Caco-2 (cell line): ENCODE measurements at regions of chr19 and their contacts with region 1.

Region 1: GRCh38 chr19:12796146-12797071 is 5.1 kb downstream of the JUNB start:
- DNase-seq: peak; percentile 81 to 83
- H3K4me3 ChIP-seq: no peak overlapping the region
- H3K4me3 Mint-ChIP-seq: peak overlapping the region; percentile 45
- H3K27ac Mint-ChIP-seq: peak overlapping the region; percentile 21
- H3K4me1 ChIP-seq: peaks cover 9% of the 10 kb centered on the region
- H3K4me1 Mint-ChIP-seq: peaks cover 5% of the 10 kb centered on the region
- H3K27me3 ChIP-seq: no peaks in the 10 kb centered on the region
- H3K27me3 Mint-ChIP-seq: no peaks in the 10 kb centered on the region
- CTCF ChIP-seq: peak; percentile 91

Region 2: GRCh38 chr19:12564016-12564664 is 232.3 kb before region 1 on chr19:
- CTCF ChIA-PET with region 1: no interaction called
- POLR2A ChIA-PET with region 1: no interaction called
- intact Hi-C with region 1: no loop called
- DNase-seq: peak; percentile 82 to 90
- H3K4me3 ChIP-seq: no peak overlapping the region
- H3K4me3 Mint-ChIP-seq: no peak overlapping the region
- H3K27ac Mint-ChIP-seq: no peak overlapping the region
- H3K4me1 ChIP-seq: no peaks in the 10 kb centered on the region
- H3K4me1 Mint-ChIP-seq: no peaks in the 10 kb centered on the region
- H3K27me3 ChIP-seq: no peaks in the 10 kb centered on the region
- H3K27me3 Mint-ChIP-seq: no peaks in the 10 kb centered on the region
- CTCF ChIP-seq: peak; percentile 80 to 82

Region 3: DNA sequence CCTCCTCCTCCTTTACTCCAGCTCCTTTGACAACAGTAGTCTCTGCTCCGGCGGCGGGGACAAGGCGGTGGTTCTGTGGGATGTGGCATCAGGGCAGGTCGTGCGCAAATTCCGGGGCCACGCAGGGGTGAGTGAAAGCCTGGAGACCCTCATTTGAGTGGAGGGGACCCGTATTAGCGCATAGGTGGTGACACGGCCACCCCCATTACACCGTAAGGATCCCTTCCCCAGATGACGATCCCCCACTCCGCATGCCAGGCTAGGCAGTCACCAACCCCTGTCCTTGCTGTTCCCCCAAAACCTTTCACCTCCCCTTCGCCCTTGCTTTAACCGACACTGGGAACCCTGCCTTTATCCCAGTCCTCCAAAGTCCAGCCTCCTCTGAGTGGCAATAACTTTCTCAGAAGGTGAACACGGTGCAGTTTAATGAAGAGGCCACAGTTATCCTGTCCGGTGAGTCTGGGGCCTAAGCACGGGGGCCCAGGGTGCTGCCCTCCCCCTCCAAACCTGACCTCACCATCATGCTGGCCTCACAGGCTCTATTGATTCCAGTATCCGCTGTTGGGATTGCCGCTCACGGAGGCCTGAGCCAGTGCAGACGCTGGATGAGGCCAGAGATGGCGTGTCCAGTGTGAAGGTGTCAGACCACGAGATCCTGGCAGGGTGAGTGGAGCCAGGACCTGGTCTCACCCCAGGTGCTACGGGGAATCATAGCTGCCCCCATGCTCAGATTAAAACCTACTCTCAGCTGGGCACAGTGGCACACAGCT is 126.1 kb before region 1 on chr19:
- CTCF ChIA-PET with region 1: no interaction called
- POLR2A ChIA-PET with region 1: no interaction called
- intact Hi-C with region 1: no loop called
- DNase-seq: no peak
- H3K4me3 ChIP-seq: peak overlapping the region; percentile 84
- H3K4me3 Mint-ChIP-seq: peak overlapping the region; percentile 85
- H3K27ac Mint-ChIP-seq: peak overlapping the region; percentile 94
- H3K4me1 ChIP-seq: peaks cover 12% of the 10 kb centered on the region
- H3K4me1 Mint-ChIP-seq: peaks cover 8% of the 10 kb centered on the region
- H3K27me3 ChIP-seq: no peaks in the 10 kb centered on the region
- H3K27me3 Mint-ChIP-seq: no peaks in the 10 kb centered on the region
- CTCF ChIP-seq: no peak

Region 4: DNA sequence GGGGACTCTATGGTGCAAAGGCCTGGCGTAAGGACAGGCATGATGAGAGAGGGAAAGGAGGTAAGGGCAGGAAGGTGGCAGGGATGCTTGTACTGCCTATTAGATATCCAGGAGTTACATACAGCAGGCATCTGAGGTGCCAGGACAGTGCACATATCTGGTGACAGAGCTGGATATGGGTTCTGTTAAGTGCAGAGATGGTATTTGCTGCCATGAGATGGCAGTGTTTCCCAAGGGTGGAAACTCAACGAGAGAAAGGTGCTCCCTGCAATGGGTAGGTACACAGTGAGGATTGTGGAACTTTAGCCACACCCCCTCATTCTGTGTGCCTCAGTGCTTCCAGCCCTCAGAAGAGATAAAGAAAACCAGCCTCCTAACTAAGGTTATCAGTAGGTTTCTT is 79.5 kb before region 1 on chr19:
- CTCF ChIA-PET with region 1: interaction called, 5 read pairs
- POLR2A ChIA-PET with region 1: interaction called, 11 read pairs
- intact Hi-C with region 1: loop called (anchors 2 kb)
- DNase-seq: peak; percentile 62 to 70
- H3K4me3 ChIP-seq: no peak overlapping the region
- H3K4me3 Mint-ChIP-seq: no peak overlapping the region
- H3K27ac Mint-ChIP-seq: no peak overlapping the region
- H3K4me1 ChIP-seq: 0 out of 2 replicates have a peak, but pooled peaks cover 8% of the 10 kb centered on the region
- H3K4me1 Mint-ChIP-seq: peaks cover 6% of the 10 kb centered on the region
- H3K27me3 ChIP-seq: no peaks in the 10 kb centered on the region
- H3K27me3 Mint-ChIP-seq: no peaks in the 10 kb centered on the region
- CTCF ChIP-seq: peak; percentile 27 to 33

Region 5: GRCh38 chr19:12956446-12957388 is 160.3 kb after region 1 on chr19 and contains the start of gene GADD45GIP1:
- CTCF ChIA-PET with region 1: no interaction called
- POLR2A ChIA-PET with region 1: no interaction called
- intact Hi-C with region 1: no loop called
- DNase-seq: peak; percentile 86 to 92
- H3K4me3 ChIP-seq: peak within 1 kb of the TSS; percentile 99
- H3K4me3 Mint-ChIP-seq: peak within 1 kb of the TSS; percentile 74
- H3K27ac Mint-ChIP-seq: peak within 1 kb of the TSS; percentile 85
- H3K4me1 ChIP-seq: peaks cover 9% of the 10 kb centered on the region; the same call in 1 of the 2 replicates
- H3K4me1 Mint-ChIP-seq: peaks cover 7% of the 10 kb centered on the region
- H3K27me3 ChIP-seq: no peaks in the 10 kb centered on the region
- H3K27me3 Mint-ChIP-seq: no peaks in the 10 kb centered on the region
- CTCF ChIP-seq: no peak
- total RNA-seq, gene GADD45GIP1: 39.3 and 42.7 TPM in 2 replicates